ENCODE measurements at regions of chr18 and their contacts with region 1.

Region 1: DNA sequence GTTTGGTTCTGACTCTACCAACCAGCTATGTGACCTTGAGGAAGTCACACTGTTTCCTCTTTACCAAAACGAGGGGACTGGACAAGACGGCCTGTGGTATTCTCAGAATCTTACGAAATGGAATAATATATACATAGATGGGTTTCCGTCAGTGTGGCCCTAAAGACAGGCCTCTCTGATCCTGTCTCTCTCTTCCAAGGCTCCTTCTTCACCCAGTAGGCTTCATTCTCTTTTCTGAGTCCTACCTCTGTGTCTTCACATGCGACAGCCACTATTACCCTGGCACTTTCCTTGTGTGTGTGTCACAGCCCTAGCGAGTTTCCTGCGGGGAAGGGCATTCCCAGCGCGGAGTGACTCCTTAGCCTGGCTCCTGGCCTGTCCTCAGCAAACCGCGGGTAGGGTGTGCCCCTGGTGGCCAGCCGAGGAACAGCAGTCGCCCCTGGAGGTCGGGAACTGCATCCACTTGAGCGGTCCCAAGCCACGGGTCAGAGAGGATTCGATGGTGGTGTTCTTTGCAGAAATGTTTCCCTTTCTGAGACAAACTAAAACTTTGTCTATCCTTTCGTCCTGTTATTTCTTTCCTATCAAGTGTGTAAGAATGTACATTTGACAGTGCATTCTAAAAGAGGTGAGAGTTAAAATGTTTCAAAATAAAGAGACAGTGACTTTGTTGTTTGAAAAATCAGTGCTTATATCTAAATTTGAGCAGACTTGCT is 63.3 kb downstream of the RAB31 start:
- DNase-seq: peak; percentile 39 to 92
- H3K4me3 ChIP-seq: no peak overlapping the region
- H3K27ac ChIP-seq: peak overlapping the region in 1 of 2 donors; percentile 35
- H3K4me1 ChIP-seq: peaks cover 0 to 5% of the 10 kb centered on the region in 2 donors
- H3K27me3 ChIP-seq: no peaks in the 10 kb centered on the region
- CTCF ChIP-seq: peak; percentile 94 to 99 (median 98)

Region 2: DNA sequence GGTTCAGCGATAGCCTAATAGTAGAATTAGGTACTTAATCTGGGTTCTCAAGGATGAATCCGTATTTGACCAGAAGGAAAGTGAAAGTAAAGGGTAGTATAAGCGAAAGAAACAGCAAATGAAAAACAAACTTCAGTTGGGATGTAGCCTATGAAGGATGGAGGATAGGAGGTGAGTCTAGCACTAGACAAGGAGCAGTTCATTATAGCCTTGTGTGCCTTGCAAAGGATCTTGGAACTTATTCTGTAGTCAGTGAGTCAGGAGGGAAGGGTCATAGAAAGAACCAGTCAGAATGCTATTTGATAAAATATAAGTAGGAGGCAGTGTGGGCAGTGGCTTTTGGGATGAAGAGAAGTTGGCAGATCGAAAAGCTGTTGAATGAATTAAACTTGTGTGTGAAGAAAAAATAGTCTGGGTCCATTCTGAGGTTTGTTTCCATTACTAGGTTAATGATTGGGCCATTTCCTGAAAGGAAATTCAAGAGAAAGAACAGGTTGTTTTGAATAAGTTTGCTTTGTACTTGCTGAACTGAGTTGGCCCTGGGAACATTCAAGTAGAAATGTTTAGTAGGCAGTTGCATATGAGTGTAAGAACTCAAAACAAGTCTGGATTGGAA is 586.3 kb before region 1 on chr18:
- intact Hi-C with region 1: no loop called
- DNase-seq: no peak
- H3K4me3 ChIP-seq: no peak overlapping the region
- H3K27ac ChIP-seq: peak overlapping the region in 1 of 2 donors; percentile 22
- H3K4me1 ChIP-seq: peaks cover 4 to 12% of the 10 kb centered on the region in 2 donors
- H3K27me3 ChIP-seq: no peaks in the 10 kb centered on the region
- CTCF ChIP-seq: no peak

Region 3: DNA sequence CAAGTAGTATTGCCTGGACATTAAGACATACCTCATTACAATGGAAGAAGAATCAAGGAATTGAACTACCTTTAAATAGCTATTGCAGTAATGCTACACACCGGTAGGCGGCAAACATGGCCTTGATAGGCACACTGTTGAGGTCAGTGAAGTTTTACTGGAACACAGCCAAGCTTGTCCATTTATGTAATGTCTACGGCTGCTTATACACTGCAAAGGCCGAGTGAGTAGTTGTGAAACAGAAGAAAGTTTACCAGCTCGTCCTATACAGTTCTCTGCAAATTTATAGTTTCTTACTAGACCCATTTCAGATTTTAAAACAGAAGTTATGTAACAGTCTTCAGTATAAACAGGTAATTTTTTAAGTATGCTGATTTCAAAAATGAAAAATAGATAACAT is 195.9 kb before region 1 on chr18:
- intact Hi-C with region 1: loop called (anchors 1 kb)
- DNase-seq: peak in 1 of 2 donors; percentile 91
- H3K4me3 ChIP-seq: no peak overlapping the region
- H3K27ac ChIP-seq: peak overlapping the region in 1 of 2 donors; percentile 6
- H3K4me1 ChIP-seq: no peaks in the 10 kb centered on the region
- H3K27me3 ChIP-seq: no peaks in the 10 kb centered on the region
- CTCF ChIP-seq: peak; percentile 75 to 86 (median 76)

Region 4: DNA sequence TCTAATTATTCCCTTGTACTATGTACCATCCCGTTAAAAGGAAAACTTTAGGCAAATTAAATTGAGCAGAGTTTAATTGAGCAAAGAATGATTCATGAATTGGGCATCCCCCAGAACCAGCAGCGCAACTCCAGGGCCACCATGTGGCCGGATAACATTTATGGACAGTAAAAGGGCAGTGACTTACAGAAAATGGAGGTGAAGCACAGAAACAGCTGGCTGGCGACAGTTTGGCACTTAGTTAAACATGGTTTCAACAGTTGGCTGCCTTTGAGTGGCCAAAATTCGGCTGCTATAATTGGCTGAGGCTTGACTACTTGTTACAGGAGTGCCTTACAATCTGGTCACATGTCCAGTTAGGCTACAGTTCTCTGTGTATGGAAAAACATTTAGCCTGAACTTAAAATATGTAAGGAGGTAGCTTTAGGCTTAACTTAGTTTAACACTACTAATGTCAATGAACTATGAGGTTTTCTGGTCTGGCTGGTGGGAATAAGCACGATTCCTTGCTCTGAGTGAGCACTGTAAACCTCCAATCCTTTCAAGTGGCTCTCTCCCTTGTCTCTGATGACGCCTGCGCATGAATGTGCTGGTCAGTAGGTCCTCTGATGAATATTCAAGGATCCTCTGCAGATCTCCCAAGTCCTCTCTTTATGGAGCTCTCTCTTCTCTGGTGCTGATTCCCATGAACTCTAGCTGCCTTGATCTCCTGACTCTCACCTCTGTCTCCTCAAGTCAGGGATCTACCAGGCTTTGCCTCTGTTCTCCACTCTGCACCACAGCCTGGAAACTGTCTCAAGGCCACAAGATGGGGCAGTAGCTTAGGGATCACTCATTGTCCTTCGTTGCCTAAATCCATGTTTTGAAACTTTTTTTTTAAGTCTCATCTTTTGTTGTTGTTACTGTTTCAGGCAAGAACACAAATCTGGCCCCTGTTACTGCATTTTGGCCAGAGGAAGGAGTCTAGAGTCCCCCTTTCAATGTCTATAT is 87.7 kb before region 1 on chr18:
- intact Hi-C with region 1: loop called (anchors 5 kb)
- DNase-seq: peak in 1 of 2 donors; percentile 67
- H3K4me3 ChIP-seq: peak overlapping the region; percentile 16 to 45
- H3K27ac ChIP-seq: peak overlapping the region; percentile 79 to 86
- H3K4me1 ChIP-seq: peaks cover 9 to 18% of the 10 kb centered on the region in 2 donors
- H3K27me3 ChIP-seq: no peaks in the 10 kb centered on the region
- CTCF ChIP-seq: peak; percentile 25 to 57 (median 28)

Region 5: DNA sequence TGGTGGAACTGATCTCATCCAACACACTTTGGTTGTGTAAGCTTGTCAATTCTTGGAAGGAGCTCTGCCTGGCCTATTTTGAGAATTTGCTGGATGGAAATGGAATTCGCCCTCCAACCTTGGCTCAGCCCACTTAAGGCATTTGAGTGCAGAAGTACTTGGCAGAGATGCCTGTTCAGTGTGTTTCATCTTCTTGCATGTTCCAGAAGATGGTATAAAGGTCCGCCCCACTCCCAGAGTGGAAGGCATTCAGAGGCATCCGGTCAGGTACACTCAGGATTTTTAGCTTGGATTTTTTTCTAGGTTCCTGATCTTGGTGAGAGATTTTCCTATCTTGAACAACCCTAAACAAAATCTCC is 53.0 kb after region 1 on chr18:
- intact Hi-C with region 1: loop called (anchors 5 kb)
- DNase-seq: peak in 1 of 2 donors; percentile 83
- H3K4me3 ChIP-seq: no peak overlapping the region
- H3K27ac ChIP-seq: peak overlapping the region; percentile 42 to 66
- H3K4me1 ChIP-seq: peaks cover 14 to 35% of the 10 kb centered on the region in 2 donors
- H3K27me3 ChIP-seq: no peaks in the 10 kb centered on the region
- CTCF ChIP-seq: no peak